B cell (primary cell): ENCODE measurements at regions of chr10 and their contacts with region 1.

Region 1: DNA sequence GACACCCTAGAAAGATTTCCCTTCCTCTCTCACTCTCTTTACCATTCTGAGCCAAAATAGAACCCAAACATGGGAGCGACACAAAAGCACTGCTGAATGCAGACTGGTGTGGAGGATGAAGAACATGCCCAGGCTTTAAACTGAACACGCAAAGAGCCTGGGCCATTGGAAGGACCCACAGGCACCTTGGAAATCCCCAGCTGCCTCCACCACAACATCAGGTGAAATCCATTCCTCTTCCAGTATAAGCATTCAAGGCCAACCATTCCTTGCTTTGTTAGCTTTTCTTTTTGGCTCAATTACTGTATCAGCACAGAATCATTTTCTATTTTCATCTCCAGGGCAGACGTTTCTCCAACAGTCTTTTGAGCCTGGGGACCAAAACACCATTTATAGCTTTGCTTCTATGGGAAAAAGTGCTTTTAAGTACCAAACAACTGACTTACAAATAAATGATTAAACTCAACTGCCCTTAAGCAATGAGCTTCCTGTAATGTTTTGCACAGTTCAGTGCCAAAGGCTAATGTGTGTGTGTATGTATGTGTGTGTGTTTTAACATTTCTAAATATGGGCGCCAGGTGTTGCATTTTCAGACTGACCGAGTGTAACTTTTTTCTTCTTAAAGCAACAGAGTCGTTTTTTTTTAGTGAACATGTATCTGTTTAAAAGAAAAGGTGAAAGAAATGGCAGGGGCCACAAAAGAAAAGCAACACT is 16.2 kb upstream of the BLNK start:
- DNase-seq: peak; percentile 83
- ATAC-seq: peak; percentile 76
- H3K4me3 ChIP-seq: peak overlapping the region; percentile 42 to 77 (median 67)
- H3K4me3 Mint-ChIP-seq: peak overlapping the region; percentile 84
- H3K27ac ChIP-seq: peak overlapping the region; percentile 86
- H3K27ac Mint-ChIP-seq: peak overlapping the region; percentile 92
- H3K4me1 ChIP-seq: peaks cover 63 to 64% of the 10 kb centered on the region in 2 donors
- H3K4me1 Mint-ChIP-seq: peaks cover 76% of the 10 kb centered on the region
- H3K27me3 ChIP-seq: no peaks in the 10 kb centered on the region
- H3K27me3 Mint-ChIP-seq: no peaks in the 10 kb centered on the region
- CTCF ChIP-seq: no peak

Region 2: GRCh38 chr10:96168546-96168945 is 119.0 kb before region 1 on chr10:
- CTCF ChIA-PET with region 1: no interaction called
- POLR2A ChIA-PET with region 1: no interaction called
- intact Hi-C with region 1: no loop called
- DNase-seq: no peak
- ATAC-seq: no peak
- H3K4me3 ChIP-seq: no peak overlapping the region
- H3K4me3 Mint-ChIP-seq: no peak overlapping the region
- H3K27ac ChIP-seq: no peak overlapping the region
- H3K27ac Mint-ChIP-seq: no peak overlapping the region
- H3K4me1 ChIP-seq: no peaks in the 10 kb centered on the region
- H3K4me1 Mint-ChIP-seq: no peaks in the 10 kb centered on the region
- H3K27me3 ChIP-seq: no peaks in the 10 kb centered on the region
- H3K27me3 Mint-ChIP-seq: no peaks in the 10 kb centered on the region
- CTCF ChIP-seq: no peak

Region 3: GRCh38 chr10:96271016-96271829 is 16.3 kb before region 1 on chr10 and contains the start of gene BLNK:
- CTCF ChIA-PET with region 1: interaction called, 122 read pairs
- POLR2A ChIA-PET with region 1: interaction called, 48 read pairs
- intact Hi-C with region 1: loop called (anchors 1 kb)
- DNase-seq: peak; percentile 82
- ATAC-seq: peak; percentile 54
- H3K4me3 ChIP-seq: peak within 1 kb of the TSS; percentile 73 to 97 (median 96)
- H3K4me3 Mint-ChIP-seq: peak within 1 kb of the TSS; percentile 97
- H3K27ac ChIP-seq: peak within 1 kb of the TSS; percentile 79 to 88
- H3K27ac Mint-ChIP-seq: peak within 1 kb of the TSS; percentile 99
- H3K4me1 ChIP-seq: peaks cover 61 to 63% of the 10 kb centered on the region in 2 donors
- H3K4me1 Mint-ChIP-seq: peaks cover 80% of the 10 kb centered on the region
- H3K27me3 ChIP-seq: no peaks in the 10 kb centered on the region
- H3K27me3 Mint-ChIP-seq: no peaks in the 10 kb centered on the region
- CTCF ChIP-seq: no peak
- total RNA-seq, gene BLNK: 205 and 210 TPM in 2 replicates